ENCODE measurements at regions of chr15 and their contacts with region 1.

Region 1: DNA sequence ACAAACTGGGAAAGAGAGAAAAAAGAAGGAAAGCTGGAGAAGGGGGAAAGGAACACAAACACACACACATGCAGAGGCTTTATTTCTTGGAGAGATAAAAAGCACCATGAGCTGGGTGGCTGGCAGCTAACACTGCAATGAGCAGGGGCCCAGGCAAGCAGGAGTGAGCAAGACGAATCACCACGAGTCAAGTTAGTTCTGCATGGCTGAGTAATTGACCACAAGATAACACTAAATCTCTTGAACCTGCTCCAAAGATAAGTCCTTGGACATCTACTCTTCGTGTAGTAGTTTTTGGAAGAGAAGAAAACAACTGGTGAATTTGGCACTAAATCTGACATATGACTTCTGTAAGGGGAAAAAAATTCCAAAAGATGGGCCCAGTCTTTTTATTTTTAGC is 100.9 kb downstream of the MYO5A start:
- DNase-seq: peak; percentile 58 to 83
- ATAC-seq: peak; percentile 74 to 87
- H3K4me3 ChIP-seq: peak overlapping the region in 2 of 4 donors; percentile 20 to 25
- H3K27ac ChIP-seq: peak overlapping the region; percentile 77 to 91 (median 83)
- H3K4me1 ChIP-seq: peaks cover 34 to 63% of the 10 kb centered on the region in 2 donors
- H3K27me3 ChIP-seq: no peaks in the 10 kb centered on the region
- CTCF ChIP-seq: no peak
- POLR2A ChIP-seq: peak; percentile 47 to 66

Region 2: GRCh38 chr15:52642386-52643361 is 214.9 kb after region 1 on chr15:
- in situ Hi-C with region 1: no loop called
- intact Hi-C with region 1: loop called (anchors 10 kb)
- DNase-seq: no peak
- ATAC-seq: peak in 1 of 2 donors; percentile 7
- H3K4me3 ChIP-seq: no peak overlapping the region
- H3K27ac ChIP-seq: peak overlapping the region; percentile 79 to 89 (median 82)
- H3K4me1 ChIP-seq: peaks cover 41 to 61% of the 10 kb centered on the region in 2 donors
- H3K27me3 ChIP-seq: no peaks in the 10 kb centered on the region
- CTCF ChIP-seq: no peak
- POLR2A ChIP-seq: no peak

Measured in gastrocnemius medialis (tissue), 4 donors.